Heart left ventricle (tissue), 16 donors: ENCODE measurements at regions of chr19 and their contacts with region 1.

Region 1: DNA sequence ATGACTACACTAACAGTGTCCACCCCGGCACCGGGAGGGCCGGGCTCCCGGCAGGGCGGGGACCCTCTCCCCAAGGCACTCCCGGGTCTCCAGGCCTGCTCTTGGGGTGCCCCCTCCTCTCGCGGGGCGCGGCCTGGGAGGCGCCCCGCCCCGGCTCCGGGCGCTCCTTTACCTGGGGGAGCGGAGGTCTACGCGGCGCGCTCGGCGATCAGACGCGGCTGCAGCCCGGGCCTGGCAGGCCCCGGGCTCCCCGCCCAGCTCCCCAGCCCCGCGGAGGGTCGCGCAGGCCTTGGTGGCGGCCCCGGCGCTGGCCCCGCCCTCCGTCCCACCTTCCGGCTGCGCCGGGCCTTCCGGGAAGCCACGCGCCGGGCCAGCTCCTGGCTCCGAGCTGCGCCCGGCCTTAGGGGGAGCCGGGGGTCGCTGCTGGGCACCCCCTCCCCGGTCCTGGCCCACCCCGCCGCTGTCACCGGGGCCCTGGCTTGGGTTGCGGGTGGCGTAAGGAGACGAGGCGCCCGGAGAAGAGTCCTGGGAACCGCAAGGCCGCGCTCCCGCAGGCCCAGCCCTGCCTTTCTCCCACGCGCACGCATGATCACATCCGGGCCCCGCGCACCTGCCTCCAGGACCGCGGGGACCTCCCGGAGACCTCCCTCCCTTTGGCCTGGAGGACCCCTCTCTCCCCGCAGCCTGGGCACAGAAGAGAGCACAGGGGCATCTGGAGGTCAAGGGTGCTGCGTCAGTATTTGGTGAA is at the start of gene C19orf12:
- DNase-seq: peak; percentile 54 to 82 (median 72)
- ATAC-seq: peak; percentile 38 to 89 (median 76)
- H3K4me3 ChIP-seq: peak within 1 kb of the TSS; percentile 68 to 100 (median 91)
- H3K27ac ChIP-seq: peak within 1 kb of the TSS; percentile 89 to 100 (median 96)
- H3K4me1 ChIP-seq: peaks cover 0 to 48% (median 24%) of the 10 kb centered on the region in 12 donors
- H3K27me3 ChIP-seq: peaks cover 0 to 2% (median 0%) of the 10 kb centered on the region in 9 donors
- CTCF ChIP-seq: no peak
- POLR2A ChIP-seq: peak; percentile 47 to 84
- total RNA-seq, gene C19orf12: 35.7 to 80.3 (median 49.2) TPM

Region 2: GRCh38 chr19:29212648-29213573 is 502.2 kb before region 1 on chr19 and contains the start of gene UQCRFS1:
- intact Hi-C with region 1: loop called in 1 of 10 experiments (anchors 5 kb)
- DNase-seq: peak; percentile 95 to 98 (median 97)
- ATAC-seq: peak; percentile 97 to 100 (median 99)
- H3K4me3 ChIP-seq: peak within 1 kb of the TSS; percentile 65 to 99 (median 90)
- H3K27ac ChIP-seq: peak within 1 kb of the TSS; percentile 77 to 98 (median 95)
- H3K4me1 ChIP-seq: peaks cover 0 to 40% (median 19%) of the 10 kb centered on the region in 12 donors
- H3K27me3 ChIP-seq: no peaks in the 10 kb centered on the region
- CTCF ChIP-seq: peak in 2 of 12 donors; percentile 4 to 5
- POLR2A ChIP-seq: peak in 1 of 2 donors; percentile 89
- total RNA-seq, gene UQCRFS1: 87.6 to 160 (median 130) TPM

Region 3: GRCh38 chr19:29665215-29665825 is 49.8 kb before region 1 on chr19 and contains the start of gene PLEKHF1:
- intact Hi-C with region 1: loop called (anchors 2 to 10 kb)
- DNase-seq: peak; percentile 93 to 96 (median 94)
- ATAC-seq: peak; percentile 48 to 87 (median 84)
- H3K4me3 ChIP-seq: peak within 1 kb of the TSS; percentile 55 to 98 (median 92)
- H3K27ac ChIP-seq: peak within 1 kb of the TSS; percentile 80 to 98 (median 93)
- H3K4me1 ChIP-seq: peaks cover 14 to 71% (median 55%) of the 10 kb centered on the region in 12 donors
- H3K27me3 ChIP-seq: no peaks in the 10 kb centered on the region
- CTCF ChIP-seq: peak in 2 of 12 donors; percentile 17 to 23
- POLR2A ChIP-seq: peak; percentile 74 to 92
- total RNA-seq, gene PLEKHF1: 7.8 to 46.1 (median 17.5) TPM

Region 4: DNA sequence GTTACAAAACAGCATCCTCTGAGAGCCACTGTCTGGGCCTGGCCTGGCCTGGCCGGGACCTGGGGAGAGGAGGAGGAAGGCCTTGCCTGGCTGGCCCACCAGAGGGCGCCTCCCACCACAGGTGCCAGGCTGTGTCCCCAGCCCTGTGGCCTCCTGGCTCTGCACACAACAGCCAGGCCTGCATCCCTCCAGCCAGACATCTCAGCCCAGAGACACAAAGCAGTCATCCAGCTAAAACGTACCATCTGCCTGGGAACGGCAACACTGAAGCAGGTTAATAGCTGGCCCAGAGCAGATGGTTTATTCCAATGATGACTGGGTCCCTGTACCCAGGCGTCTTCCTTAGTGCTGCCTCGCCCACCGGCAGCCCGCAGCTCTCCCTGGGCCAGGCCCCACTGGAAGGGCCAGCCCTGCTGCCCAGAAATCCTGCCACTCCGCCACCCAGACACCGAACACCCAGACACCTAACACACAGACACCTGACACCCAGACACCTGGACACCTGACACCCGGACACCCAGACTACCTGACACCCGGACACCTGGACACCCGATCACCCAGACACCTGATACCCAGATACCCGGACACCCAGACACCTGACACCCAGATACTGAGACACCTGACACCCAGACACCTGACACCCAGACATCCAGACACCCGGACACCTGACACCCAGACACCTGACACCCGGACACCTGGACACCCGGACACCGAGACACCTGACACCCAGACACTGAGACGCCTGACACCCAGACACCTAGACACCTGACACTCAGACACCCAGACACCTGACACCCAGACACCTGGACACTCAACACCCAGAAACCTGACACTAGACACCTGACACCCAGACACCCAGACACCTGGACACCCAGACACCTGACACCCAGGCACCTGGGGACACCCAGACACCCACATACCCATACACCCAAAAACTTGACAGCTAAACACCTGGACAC is 20.2 kb before region 1 on chr19:
- intact Hi-C with region 1: loop called in 7 of 10 experiments (anchors 1 to 2 kb)
- DNase-seq: peak; percentile 72 to 90 (median 86)
- ATAC-seq: peak; percentile 91 to 98 (median 96)
- H3K4me3 ChIP-seq: no peak overlapping the region
- H3K27ac ChIP-seq: peak overlapping the region in 1 of 12 donors; percentile 40
- H3K4me1 ChIP-seq: peaks cover 0 to 7% (median 2%) of the 10 kb centered on the region in 12 donors
- H3K27me3 ChIP-seq: no peaks in the 10 kb centered on the region
- CTCF ChIP-seq: peak; percentile 82 to 95 (median 87)
- POLR2A ChIP-seq: no peak